PC-9 (cell line): ENCODE measurements at regions of chr15 and their contacts with region 1.

Region 1: DNA sequence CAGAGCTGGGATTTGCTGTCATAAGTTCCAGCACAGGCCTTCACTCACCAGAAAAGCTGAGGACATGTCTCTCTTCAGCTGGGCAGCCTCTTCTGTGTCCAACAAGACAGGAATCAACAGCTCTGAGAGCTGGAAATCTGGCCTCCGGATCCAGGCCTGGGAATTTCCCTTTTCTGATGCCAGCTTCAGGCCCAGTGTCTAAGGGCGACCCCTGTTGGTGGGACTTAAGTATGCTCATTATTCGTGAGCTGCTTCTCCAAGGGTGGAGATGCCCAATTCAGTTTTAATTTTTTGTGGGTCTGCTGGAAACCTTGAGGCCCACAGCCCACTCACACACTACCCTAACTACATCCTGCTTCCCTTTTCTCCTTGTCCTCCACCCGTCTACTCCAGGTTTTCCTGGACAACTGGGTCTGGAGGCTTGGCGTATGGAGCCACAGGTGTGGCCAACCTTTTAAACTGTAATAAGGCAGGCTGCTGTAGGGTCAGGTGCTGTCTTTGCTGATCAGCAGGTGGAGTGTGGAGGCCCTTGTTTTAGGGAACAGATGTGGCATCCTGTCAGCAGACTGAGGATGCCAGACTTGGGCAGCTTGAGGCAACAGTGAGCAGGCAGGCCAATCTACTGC is 2.6 kb upstream of the CEMIP start:
- DNase-seq: peak in 1 of 2 experiments; percentile 14
- H3K4me3 ChIP-seq: no peak overlapping the region
- H3K27ac ChIP-seq: peak overlapping the region; percentile 90
- H3K4me1 ChIP-seq: peaks cover 50% of the 10 kb centered on the region
- H3K27me3 ChIP-seq: no peaks in the 10 kb centered on the region
- CTCF ChIP-seq: peak; percentile 66

Region 2: GRCh38 chr15:80367094-80367493 is 409.4 kb before region 1 on chr15:
- CTCF ChIA-PET with region 1: no interaction called
- POLR2A ChIA-PET with region 1: no interaction called
- intact Hi-C with region 1: no loop called
- DNase-seq: peak in 1 of 2 experiments; percentile 10
- H3K4me3 ChIP-seq: no peak overlapping the region
- H3K27ac ChIP-seq: no peak overlapping the region
- H3K4me1 ChIP-seq: no peaks in the 10 kb centered on the region
- H3K27me3 ChIP-seq: peaks cover 46% of the 10 kb centered on the region
- CTCF ChIP-seq: peak; percentile 55

Region 3: GRCh38 chr15:80588801-80589200 is 187.7 kb before region 1 on chr15:
- CTCF ChIA-PET with region 1: no interaction called
- POLR2A ChIA-PET with region 1: no interaction called
- intact Hi-C with region 1: loop called (anchors 1 kb)
- DNase-seq: peak; percentile 34 to 99
- H3K4me3 ChIP-seq: no peak overlapping the region
- H3K27ac ChIP-seq: peak overlapping the region; percentile 90
- H3K4me1 ChIP-seq: peaks cover 51% of the 10 kb centered on the region
- H3K27me3 ChIP-seq: no peaks in the 10 kb centered on the region
- CTCF ChIP-seq: no peak

Region 4: GRCh38 chr15:80660122-80660521 is 116.4 kb before region 1 on chr15:
- CTCF ChIA-PET with region 1: no interaction called
- POLR2A ChIA-PET with region 1: no interaction called
- intact Hi-C with region 1: loop called (anchors 1 kb)
- DNase-seq: peak in 1 of 2 experiments; percentile 15
- H3K4me3 ChIP-seq: no peak overlapping the region
- H3K27ac ChIP-seq: peak overlapping the region; percentile 43
- H3K4me1 ChIP-seq: peaks cover 40% of the 10 kb centered on the region
- H3K27me3 ChIP-seq: no peaks in the 10 kb centered on the region
- CTCF ChIP-seq: no peak

Region 5: DNA sequence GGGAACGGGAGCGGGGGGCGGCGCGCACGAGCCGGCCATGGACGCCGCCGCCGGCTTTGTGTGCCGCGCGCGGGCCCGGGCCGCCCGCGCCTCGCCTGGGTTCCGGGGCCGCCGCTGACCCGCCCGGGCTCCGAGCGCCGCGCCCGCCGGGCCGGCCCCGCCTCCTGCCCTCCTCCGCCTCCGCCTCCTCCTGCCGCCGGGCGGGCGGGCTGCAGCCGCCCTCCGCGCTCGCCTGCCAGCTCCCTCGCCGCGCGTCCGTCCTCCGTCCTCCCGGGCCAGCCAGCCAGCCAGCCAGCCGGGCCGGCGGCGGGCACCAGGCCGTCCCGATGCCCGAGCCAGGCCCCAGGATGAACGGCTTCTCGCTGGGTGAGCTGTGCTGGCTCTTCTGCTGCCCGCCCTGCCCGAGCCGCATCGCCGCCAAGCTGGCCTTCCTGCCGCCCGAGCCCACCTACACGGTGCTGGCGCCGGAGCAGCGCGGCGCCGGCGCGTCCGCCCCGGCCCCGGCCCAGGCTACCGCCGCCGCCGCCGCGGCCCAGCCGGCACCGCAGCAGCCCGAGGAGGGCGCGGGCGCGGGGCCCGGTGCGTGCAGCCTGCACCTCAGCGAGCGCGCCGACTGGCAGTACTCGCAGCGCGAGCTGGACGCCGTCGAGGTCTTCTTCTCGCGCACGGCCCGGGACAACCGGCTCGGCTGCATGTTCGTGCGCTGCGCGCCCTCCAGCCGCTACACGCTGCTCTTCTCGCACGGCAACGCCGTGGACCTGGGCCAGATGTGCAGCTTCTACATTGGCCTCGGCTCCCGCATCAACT is 81.2 kb before region 1 on chr15 and contains the start of gene ABHD17C:
- CTCF ChIA-PET with region 1: no interaction called
- POLR2A ChIA-PET with region 1: interaction called, 4 read pairs
- intact Hi-C with region 1: loop called (anchors 1 kb)
- DNase-seq: peak in 1 of 2 experiments; percentile 72
- H3K4me3 ChIP-seq: peak within 1 kb of the TSS; percentile 99
- H3K27ac ChIP-seq: peak within 1 kb of the TSS; percentile 74
- H3K4me1 ChIP-seq: peaks cover 61% of the 10 kb centered on the region
- H3K27me3 ChIP-seq: no peaks in the 10 kb centered on the region
- CTCF ChIP-seq: no peak
- total RNA-seq, gene ABHD17C: 35.6 and 42.2 TPM in 2 replicates

Region 6: DNA sequence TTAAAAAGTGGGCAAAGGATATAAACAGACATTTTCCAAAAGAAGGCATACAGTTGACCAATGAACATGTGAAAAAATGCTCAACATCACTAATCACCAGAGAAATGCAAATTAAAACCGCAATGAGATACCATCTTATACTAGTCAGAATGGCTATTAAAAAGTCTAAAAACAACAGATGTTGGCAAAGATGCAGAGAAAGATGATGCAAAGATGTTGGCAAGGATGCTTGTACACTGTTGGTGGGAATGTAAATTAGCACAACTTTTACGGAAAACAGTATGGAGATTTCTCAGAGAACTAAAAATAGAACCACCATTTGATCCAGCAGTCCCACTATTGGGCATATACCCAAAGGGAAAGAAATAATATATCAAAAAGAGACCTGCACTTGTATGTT is 277.7 kb after region 1 on chr15:
- CTCF ChIA-PET with region 1: no interaction called
- POLR2A ChIA-PET with region 1: no interaction called
- intact Hi-C with region 1: no loop called
- DNase-seq: no peak
- H3K4me3 ChIP-seq: no peak overlapping the region
- H3K27ac ChIP-seq: no peak overlapping the region
- H3K4me1 ChIP-seq: no peaks in the 10 kb centered on the region
- H3K27me3 ChIP-seq: no peaks in the 10 kb centered on the region
- CTCF ChIP-seq: no peak